ENCODE measurements at regions of chr4 and their contacts with region 1.

Region 1: DNA sequence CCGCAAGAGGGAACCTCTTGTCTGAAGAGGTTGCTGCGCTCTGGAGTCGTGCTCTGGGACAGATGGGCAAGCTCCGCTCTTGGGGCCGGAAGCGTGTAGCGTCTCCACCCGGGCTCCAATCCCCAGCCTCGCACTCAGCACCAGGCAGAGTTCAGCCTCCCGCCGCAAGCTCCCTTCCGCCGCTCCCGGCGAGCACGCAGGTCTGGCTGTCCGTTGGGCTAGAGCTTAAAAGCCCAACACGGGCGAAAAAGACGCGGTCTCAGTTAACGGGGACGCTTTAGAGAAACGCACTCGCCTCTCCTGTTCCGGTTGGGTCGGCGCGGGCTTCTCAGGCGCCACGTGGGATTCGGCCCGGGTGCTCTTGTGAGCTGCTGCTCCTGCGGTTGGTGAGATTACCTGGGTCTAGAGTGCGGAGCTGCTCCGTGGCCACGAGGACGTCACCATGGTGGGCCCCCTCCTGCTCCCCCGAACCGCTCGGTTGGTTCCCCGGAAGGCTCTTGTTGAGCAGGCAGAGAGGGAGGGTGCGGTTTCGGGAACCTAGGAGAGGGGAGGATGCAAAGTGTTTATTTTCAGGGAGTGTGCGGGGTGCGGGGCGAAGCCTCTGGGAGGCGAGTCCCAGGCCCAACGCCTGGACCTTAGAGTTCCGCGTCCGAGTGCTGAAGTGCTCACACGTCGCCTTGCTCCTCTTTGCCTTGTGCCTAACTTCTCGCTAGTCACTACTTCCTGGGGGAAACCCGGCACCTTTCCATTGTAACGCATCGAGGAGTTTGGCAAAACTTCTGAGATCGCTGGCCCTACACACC is at the start of gene TMA16:
- DNase-seq: peak; percentile 96
- H3K4me3 Mint-ChIP-seq: peak within 1 kb of the TSS; percentile 96
- H3K27ac Mint-ChIP-seq: peak within 1 kb of the TSS; percentile 100
- H3K4me1 Mint-ChIP-seq: peaks cover 22% of the 10 kb centered on the region
- H3K27me3 Mint-ChIP-seq: peaks cover 15% of the 10 kb centered on the region
- total RNA-seq, gene TMA16: 82.3 and 83.9 TPM in 2 replicates

Region 2: GRCh38 chr4:163166041-163166579 is 328.5 kb before region 1 on chr4:
- intact Hi-C with region 1: loop called (anchors 1 kb)
- DNase-seq: peak; percentile 87
- H3K4me3 Mint-ChIP-seq: peak overlapping the region; percentile 84
- H3K27ac Mint-ChIP-seq: peak overlapping the region; percentile 97
- H3K4me1 Mint-ChIP-seq: peaks cover 41% of the 10 kb centered on the region
- H3K27me3 Mint-ChIP-seq: no peaks in the 10 kb centered on the region

Region 3: GRCh38 chr4:163505374-163505773 is 10.8 kb after region 1 on chr4:
- intact Hi-C with region 1: loop called (anchors 2 kb)
- DNase-seq: no peak
- H3K4me3 Mint-ChIP-seq: no peak overlapping the region
- H3K27ac Mint-ChIP-seq: no peak overlapping the region
- H3K4me1 Mint-ChIP-seq: peaks cover 8% of the 10 kb centered on the region
- H3K27me3 Mint-ChIP-seq: no peaks in the 10 kb centered on the region

Region 4: GRCh38 chr4:163523791-163524365 is 29.3 kb after region 1 on chr4:
- intact Hi-C with region 1: no loop called
- DNase-seq: no peak
- H3K4me3 Mint-ChIP-seq: no peak overlapping the region
- H3K27ac Mint-ChIP-seq: no peak overlapping the region
- H3K4me1 Mint-ChIP-seq: peaks cover 2% of the 10 kb centered on the region
- H3K27me3 Mint-ChIP-seq: no peaks in the 10 kb centered on the region

Region 5: DNA sequence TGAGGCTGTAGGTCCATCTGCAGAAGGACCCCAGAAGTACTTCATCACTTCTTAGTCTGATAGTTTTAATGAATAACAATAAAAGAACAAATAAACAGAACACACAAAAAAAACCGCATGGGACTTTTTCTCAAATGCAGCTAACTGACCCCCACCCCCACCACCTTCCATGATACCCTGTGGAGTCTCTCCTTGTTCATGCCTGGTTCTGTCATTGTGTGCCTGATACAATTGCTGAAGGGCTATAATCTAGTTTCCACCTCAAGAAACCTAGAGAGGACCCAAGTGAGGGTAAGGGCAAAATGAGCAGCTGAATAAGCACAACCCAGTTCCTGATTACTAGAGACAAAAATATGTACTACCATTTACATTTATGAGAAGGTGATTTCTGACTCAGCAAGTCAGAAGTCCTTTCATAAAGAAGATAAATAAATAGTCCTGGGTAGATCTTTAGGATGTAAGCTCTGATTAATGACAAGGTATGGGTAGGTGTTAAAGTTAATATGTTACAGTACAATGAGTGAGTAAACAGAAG is 155.1 kb after region 1 on chr4:
- intact Hi-C with region 1: no loop called
- DNase-seq: no peak
- H3K4me3 Mint-ChIP-seq: no peak overlapping the region
- H3K27ac Mint-ChIP-seq: no peak overlapping the region
- H3K4me1 Mint-ChIP-seq: no peaks in the 10 kb centered on the region
- H3K27me3 Mint-ChIP-seq: no peaks in the 10 kb centered on the region

Region 6: DNA sequence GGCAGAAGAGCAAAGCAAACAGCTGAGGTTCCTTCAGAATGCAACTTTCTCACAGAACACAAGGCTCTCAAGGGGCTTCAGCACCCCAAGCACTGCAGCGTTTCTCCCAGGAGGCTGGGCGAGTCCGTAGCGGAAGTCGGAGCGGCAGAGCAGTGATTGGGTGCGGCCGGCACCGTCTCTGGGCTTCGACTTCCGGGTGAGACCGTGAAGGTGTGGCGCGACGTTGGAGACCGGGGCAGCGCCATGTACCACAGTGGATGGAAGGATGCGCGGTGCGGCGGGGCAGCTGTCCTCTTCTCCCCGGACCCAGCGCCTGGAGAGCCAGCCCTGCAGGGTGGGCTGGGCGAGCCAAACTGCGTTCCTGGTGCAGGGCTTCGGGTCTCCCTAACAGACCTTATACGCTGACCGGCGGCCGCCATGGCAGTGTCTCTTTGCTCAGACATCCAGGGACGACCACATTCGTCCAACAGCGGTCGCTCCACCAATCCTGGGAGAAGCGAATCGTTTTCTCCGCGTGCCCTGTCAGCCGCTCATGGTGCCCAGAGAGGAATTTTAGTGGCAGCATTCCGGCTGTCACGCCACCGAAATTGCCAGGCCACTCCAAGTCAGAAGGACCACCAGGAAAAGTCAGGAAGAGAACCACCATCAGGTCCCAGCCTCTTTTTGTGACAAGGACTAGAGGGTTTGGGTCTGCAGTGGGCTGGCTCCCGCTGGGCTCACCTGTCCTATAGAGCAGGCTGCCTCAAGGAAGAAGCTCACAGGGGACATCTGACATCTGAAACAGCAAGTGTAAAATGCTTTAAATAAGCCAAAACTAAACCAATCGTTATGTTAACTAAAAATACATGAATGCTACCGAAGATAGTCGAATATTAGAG is 1462.4 kb after region 1 on chr4:
- intact Hi-C with region 1: loop called (anchors 10 kb)
- DNase-seq: peak; percentile 95
- H3K4me3 Mint-ChIP-seq: peak overlapping the region; percentile 94
- H3K27ac Mint-ChIP-seq: peak overlapping the region; percentile 77
- H3K4me1 Mint-ChIP-seq: peaks cover 14% of the 10 kb centered on the region
- H3K27me3 Mint-ChIP-seq: peaks cover 4% of the 10 kb centered on the region

Measured in activated CD4-positive, alpha-beta T cell treated with anti-CD3 and anti-CD28 coated beads, Interleukin-2, amount 10 ng/mL, durations not matched to agents 24 days and 14 days (primary cell).